Endothelial cell of umbilical vein (primary cell): ENCODE measurements at regions of chr7 and their contacts with region 1.

Region 1: GRCh38 chr7:46321556-46322205 is 400.6 kb upstream of the IGFBP3 start:
- DNase-seq: peak; percentile 94
- H3K4me3 ChIP-seq: no peak overlapping the region
- H3K27ac ChIP-seq: peak overlapping the region; percentile 58
- H3K4me1 ChIP-seq: no peaks in the 10 kb centered on the region
- H3K27me3 ChIP-seq: no peaks in the 10 kb centered on the region
- CTCF ChIP-seq: no peak
- POLR2A ChIP-seq: no peak

Region 2: DNA sequence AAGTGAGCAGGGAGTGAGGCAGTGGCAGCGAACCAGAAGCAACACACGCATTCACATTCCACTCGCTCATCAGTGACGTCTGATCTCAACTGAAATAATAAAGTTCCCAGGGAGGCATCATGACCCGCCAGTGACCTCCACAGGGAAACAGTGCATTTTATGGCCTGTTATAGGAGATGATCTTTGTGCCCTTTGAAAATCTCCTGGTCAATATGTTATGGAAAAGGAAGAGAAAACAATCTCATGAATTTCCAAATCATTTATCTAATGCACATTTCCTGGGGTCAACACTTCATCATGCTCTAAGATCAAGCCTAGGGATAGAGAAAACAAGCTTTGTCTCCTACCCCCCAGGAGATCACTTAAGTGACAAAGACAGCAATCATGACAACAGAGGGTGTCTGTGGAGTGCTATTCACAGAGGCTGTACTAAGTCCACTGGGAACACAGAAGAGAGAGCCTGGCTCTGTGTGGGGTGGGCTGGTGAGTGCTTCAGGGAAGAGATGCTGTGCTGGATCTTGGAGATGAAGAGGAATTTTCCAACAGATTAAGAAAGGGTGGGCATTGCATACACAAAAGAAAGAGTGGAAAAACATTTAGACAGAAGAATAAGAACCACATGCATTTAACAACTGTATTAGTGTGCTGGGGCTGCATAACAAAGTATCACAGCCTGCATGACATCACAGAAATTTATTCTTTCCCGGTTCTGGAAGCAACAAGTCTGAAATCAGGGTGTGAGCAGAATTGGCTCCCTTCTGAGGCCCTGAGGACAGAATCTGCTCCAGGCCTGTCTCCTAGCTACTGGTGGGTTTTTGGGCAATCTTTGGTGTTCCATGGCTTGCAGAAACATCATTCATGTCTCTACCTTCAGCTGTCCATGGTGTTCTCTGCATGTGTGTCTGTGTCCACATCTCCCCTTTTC is 213.2 kb after region 1 on chr7:
- CTCF ChIA-PET with region 1: no interaction called
- POLR2A ChIA-PET with region 1: no interaction called
- dilution Hi-C with region 1: no loop called
- intact Hi-C with region 1: loop called (anchors 2 kb)
- DNase-seq: peak; percentile 78
- H3K4me3 ChIP-seq: no peak overlapping the region
- H3K27ac ChIP-seq: peak overlapping the region; percentile 10
- H3K4me1 ChIP-seq: no peaks in the 10 kb centered on the region
- H3K27me3 ChIP-seq: no peaks in the 10 kb centered on the region
- CTCF ChIP-seq: no peak
- POLR2A ChIP-seq: no peak

Region 3: DNA sequence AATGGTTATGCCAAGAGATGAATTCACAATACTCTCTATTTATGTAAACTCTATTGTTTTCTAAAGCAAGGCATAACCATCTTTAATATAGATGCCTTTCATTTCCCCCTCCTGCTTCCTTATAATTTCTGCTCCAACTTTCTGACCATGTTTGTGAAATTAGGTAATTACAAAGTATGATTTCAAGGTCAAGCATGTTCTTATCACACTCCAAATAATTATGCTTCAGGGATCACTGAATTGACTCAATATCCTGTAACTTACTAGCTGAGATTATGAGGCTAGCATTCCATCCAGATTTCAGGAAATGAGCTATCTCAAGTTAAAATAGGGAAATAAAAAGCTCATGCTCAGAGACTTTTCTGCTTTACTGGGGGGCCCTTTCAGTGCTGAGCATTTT is 255.3 kb after region 1 on chr7:
- CTCF ChIA-PET with region 1: no interaction called
- POLR2A ChIA-PET with region 1: no interaction called
- dilution Hi-C with region 1: no loop called
- intact Hi-C with region 1: loop called (anchors 5 kb)
- DNase-seq: peak; percentile 88
- H3K4me3 ChIP-seq: no peak overlapping the region
- H3K27ac ChIP-seq: peak overlapping the region; percentile 55
- H3K4me1 ChIP-seq: peaks cover 23% of the 10 kb centered on the region
- H3K27me3 ChIP-seq: no peaks in the 10 kb centered on the region
- CTCF ChIP-seq: no peak
- POLR2A ChIP-seq: peak; percentile 40

Region 4: DNA sequence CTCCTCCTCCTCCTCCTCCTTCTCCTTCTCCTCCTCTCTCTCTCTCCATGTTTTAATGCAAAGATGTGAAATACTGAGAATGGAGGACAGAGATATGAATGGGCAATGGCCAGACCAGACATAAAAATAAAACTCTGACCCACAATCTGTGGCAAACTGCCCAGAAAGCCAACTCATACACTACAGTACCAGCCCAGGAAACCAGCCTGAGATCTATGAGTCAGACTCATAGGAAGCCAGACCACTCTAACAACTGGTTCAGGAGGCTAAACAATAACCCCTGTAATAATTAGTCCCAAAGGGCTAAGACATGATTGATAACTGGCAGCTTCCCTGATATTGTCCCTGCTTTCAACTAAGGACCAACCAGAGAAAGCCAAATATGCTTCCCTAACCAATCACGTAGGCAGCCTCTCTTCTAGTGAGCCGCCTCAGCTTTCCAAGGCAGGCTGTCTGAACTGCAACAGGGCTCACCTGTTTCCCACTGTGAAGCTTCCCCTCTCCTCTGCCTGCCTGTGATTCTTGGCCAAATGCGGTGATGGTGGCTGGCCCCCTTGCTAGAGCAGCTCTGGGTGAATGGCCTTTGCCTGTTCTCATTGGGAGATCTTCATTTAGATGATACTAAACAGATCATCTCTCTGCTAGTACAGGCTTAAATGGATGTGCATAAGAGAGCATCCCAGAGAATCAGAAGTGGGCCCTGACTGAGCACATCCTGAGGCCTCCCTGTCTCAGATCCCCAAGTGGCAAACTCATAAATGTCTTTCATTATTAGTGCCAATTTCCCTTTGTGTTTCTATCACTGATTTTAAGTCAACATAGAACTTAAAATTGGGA is 442.6 kb after region 1 on chr7:
- CTCF ChIA-PET with region 1: no interaction called
- POLR2A ChIA-PET with region 1: no interaction called
- dilution Hi-C with region 1: no loop called
- intact Hi-C with region 1: loop called (anchors 5 kb)
- DNase-seq: peak; percentile 99
- H3K4me3 ChIP-seq: no peak overlapping the region
- H3K27ac ChIP-seq: peak overlapping the region; percentile 69
- H3K4me1 ChIP-seq: peaks cover 28% of the 10 kb centered on the region
- H3K27me3 ChIP-seq: no peaks in the 10 kb centered on the region
- CTCF ChIP-seq: no peak
- POLR2A ChIP-seq: no peak